ENCODE measurements at regions of chr6 and their contacts with region 1.

Region 1: DNA sequence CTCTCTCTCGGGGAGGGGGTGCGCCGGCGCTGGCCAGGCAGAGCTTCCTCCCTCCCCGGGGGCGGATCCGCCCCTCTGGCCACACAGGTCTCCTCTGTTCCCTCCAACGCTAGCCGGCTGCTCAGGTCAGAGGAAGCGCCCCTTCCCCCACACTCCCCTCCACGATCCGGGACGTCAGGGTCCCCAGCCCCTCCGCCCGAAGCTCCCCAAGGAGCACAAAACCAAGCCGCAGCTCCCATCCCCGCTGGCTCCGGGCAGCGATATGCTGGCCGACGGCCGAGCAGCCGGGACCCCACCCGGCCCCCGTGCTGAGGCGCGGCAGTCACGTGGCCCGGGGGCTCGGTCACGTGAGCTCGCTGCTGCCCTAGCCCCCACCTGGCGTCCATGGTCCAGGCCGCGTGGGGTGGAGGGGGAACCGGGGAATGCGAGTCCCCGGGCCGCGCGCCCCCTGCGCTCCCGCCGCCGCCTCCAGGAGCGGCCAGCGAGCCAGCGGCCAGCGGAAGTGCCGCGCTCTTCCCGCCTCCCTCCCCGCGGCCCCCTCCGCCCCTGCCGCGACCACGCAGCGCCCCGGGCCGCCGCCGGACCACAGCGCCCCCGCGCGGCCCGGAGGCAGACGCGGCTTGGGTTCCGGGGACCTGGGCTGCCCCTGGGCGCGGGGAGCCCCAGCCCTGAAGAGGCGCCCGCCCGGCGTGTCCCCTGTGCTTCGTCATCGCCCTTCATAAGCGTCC is at the start of gene SLC35B2:
- DNase-seq: peak; percentile 71
- H3K4me3 Mint-ChIP-seq: peak within 1 kb of the TSS; percentile 87
- H3K27ac Mint-ChIP-seq: peak within 1 kb of the TSS; percentile 85
- H3K4me1 Mint-ChIP-seq: peaks cover 59% of the 10 kb centered on the region
- H3K27me3 Mint-ChIP-seq: no peaks in the 10 kb centered on the region

Region 2: DNA sequence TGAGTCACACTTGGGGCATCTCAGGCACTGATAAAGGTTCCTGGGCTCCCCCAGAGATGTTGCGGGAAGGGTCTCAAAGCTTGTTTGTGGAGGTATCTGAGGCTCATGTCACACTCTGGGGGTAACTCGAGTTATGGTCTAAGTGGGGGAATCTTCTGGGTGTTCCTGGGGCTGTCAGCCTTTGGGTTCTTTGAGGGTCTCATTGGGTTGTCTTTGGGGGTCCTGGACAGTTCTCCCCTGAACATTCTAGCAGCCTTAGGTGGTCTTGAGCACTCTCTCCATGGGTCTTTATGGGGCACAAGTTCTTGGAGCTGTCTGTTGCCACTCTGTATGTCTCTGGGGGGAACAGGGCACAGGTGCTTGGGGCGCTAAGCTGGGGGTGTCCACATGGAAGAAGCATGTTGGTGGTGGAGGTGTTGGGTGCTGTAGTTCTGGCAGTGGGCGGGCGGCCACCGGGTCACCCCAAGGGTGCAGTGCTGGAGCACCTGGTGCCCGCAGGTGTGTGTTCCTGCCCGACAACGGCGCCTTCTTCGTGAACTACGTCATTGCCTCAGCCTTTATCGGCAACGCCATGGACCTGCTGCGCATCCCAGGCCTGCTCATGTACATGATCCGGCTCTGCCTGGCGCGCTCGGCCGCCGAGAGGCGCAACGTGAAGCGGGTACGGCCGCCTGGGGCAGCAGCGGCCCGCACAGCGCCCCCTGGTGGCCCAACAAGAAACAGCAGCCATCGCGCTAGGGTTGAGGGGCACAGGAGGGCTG is 105.7 kb before region 1 on chr6:
- CTCF ChIA-PET with region 1: no interaction called
- DNase-seq: peak; percentile 85
- H3K4me3 Mint-ChIP-seq: no peak overlapping the region
- H3K27ac Mint-ChIP-seq: no peak overlapping the region
- H3K4me1 Mint-ChIP-seq: peaks cover 3% of the 10 kb centered on the region
- H3K27me3 Mint-ChIP-seq: no peaks in the 10 kb centered on the region

Region 3: GRCh38 chr6:44246663-44247337 is 10.4 kb before region 1 on chr6 and contains the start of gene HSP90AB1:
- CTCF ChIA-PET with region 1: interaction called, 15 read pairs
- DNase-seq: peak; percentile 98
- H3K4me3 Mint-ChIP-seq: peak within 1 kb of the TSS; percentile 97
- H3K27ac Mint-ChIP-seq: peak within 1 kb of the TSS; percentile 98
- H3K4me1 Mint-ChIP-seq: peaks cover 43% of the 10 kb centered on the region
- H3K27me3 Mint-ChIP-seq: peaks cover 27% of the 10 kb centered on the region

Region 4: DNA sequence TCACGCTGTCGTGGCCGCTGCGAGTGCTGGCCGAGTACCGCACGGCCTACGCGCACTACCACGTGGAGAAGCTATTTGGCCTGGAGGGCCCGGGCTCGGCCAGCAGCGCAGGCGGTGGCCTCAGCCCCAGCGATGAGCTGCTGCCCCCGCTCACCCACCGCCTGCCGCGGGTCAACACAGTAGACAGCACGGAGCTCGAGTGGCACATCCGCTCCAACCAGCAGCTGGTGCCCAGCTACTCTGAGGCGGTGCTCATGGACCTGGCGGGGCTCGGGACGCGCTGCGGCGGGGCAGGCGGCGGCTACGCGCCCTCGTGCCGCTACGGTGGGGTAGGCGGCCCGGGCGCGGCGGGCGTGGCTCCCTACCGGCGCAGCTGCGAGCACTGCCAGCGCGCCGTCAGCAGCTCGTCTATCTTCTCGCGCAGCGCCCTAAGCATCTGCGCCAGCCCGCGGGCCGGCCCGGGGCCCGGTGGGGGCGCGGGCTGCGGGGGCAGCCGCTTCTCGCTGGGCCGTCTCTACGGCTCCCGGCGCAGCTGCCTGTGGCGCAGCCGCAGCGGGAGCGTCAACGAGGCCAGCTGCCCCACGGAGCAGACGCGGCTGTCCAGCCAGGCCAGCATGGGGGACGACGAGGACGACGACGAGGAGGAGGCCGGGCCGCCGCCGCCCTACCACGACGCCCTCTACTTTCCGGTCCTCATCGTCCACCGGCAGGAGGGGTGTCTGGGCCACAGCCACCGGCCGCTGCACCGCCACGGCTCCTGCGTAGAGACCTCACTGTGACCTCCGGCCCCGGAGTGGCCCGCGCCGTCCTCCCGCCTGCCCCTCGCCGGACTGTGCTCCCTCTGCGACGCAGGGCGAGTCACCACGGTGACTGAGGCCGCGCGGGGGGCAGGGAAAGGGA is 18.8 kb after region 1 on chr6:
- CTCF ChIA-PET with region 1: no interaction called
- DNase-seq: peak; percentile 53
- H3K4me3 Mint-ChIP-seq: no peak overlapping the region
- H3K27ac Mint-ChIP-seq: no peak overlapping the region
- H3K4me1 Mint-ChIP-seq: peaks cover 9% of the 10 kb centered on the region
- H3K27me3 Mint-ChIP-seq: peaks cover 97% of the 10 kb centered on the region

Region 5: GRCh38 chr6:44715188-44715587 is 458.0 kb after region 1 on chr6:
- CTCF ChIA-PET with region 1: no interaction called
- DNase-seq: no peak
- H3K4me3 Mint-ChIP-seq: no peak overlapping the region
- H3K27ac Mint-ChIP-seq: no peak overlapping the region
- H3K4me1 Mint-ChIP-seq: no peaks in the 10 kb centered on the region
- H3K27me3 Mint-ChIP-seq: peaks cover 11% of the 10 kb centered on the region

Measured in activated naive CD4-positive, alpha-beta T cell treated with anti-CD3 and anti-CD28 coated beads, Interleukin-2, amount 10 ng/mL, durations not matched to agents 7 days and 5 days (primary cell).